Left cardiac atrium (tissue), 4 donors: ENCODE measurements at regions of chr12 and their contacts with region 1.

Region 1: DNA sequence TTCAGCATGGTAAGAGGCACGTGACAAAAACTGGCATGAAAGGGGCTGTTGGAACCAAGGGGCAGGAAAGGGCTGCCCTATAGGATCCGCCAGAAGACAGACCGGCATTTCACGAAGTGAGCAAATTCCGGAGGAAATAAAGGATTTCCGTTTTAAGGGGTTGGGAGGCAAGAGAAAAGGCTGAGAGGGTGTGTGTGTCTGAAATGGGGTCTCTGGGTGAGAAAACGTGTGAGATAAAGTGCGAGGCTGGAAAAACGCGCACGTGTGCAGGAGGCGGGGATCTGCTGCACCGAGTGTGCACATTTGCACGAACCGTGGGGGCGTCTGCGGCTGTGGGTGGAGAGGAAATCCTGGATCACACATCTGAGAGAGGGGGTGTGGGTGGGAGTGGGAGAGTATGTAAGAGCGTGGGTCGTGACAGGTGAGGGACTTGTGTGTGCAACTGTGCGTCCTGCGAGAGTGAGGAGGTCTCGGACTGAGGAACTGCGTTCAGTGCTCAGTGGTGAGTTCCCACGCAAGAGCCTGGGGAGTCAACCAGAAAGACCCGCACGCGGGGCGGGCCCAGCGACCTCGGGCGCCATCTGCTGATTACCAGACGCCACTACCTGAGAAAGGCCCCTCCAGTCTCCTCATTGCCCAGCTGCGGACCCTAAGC is 37.0 kb upstream of the P2RX7 start:
- DNase-seq: peak; percentile 76
- ATAC-seq: peak; percentile 92 to 96

Region 2: GRCh38 chr12:121060149-121061001 is 35.3 kb before region 1 on chr12:
- intact Hi-C with region 1: loop called in 1 of 2 experiments (anchors 5 kb)
- DNase-seq: peak; percentile 58
- ATAC-seq: peak; percentile 83 to 84